PC-9 (cell line): ENCODE measurements at regions of chr18 and their contacts with region 1.

Region 1: GRCh38 chr18:58911766-58912165 is 47.1 kb downstream of the ZNF532 start:
- DNase-seq: no peak
- H3K4me3 ChIP-seq: no peak overlapping the region
- H3K27ac ChIP-seq: no peak overlapping the region
- H3K4me1 ChIP-seq: peaks cover 4% of the 10 kb centered on the region; the same call in 1 of the 2 replicates
- H3K27me3 ChIP-seq: no peaks in the 10 kb centered on the region
- CTCF ChIP-seq: no peak

Region 2: DNA sequence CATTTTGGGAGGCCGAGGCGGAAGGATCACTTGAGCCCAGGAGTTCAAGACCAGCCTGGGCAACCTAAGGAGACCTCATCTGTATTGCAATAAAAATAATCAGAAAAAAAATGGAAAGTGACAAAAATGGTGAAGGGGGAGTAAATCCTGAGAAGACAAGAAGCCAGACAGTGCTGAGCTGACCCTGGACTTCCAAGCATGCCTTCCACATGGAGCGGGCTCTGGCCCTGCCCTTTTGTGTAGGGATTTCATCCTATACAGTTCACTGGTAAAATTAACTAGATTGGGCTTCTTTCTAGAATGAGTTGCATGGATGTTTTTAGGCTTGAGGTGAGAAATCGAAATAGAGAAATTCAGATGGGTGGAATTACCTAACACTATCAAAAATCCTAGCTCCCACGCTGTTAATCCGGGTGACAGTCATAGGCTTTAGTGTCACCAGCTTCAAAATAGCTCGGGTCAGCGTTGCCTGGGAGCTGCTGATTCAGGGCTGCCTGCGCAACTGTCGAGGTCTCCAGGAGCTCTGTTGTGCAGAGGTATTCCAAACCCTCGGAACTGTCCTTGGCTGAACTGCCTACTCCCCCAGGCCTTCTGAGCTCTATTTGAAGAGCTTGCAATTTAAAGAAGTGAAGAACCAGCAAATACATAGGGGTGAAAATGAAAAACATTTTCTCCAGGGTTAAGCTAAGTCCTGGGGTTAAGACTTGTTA is 68.6 kb before region 1 on chr18:
- CTCF ChIA-PET with region 1: no interaction called
- POLR2A ChIA-PET with region 1: no interaction called
- intact Hi-C with region 1: loop called (anchors 2 kb)
- DNase-seq: no peak
- H3K4me3 ChIP-seq: no peak overlapping the region
- H3K27ac ChIP-seq: no peak overlapping the region
- H3K4me1 ChIP-seq: no peaks in the 10 kb centered on the region
- H3K27me3 ChIP-seq: no peaks in the 10 kb centered on the region
- CTCF ChIP-seq: no peak